Activated CD8-positive, alpha-beta T cell treated with anti-CD3 and anti-CD28 coated beads for 36 hours (primary cell): ENCODE measurements at regions of chr11 and their contacts with region 1.

Region 1: GRCh38 chr11:117946842-117947526 is 17.8 kb upstream of the TMPRSS13 start:
- DNase-seq: peak; percentile 91
- ATAC-seq: peak; percentile 50
- H3K4me3 Mint-ChIP-seq: no peak overlapping the region
- H3K27ac Mint-ChIP-seq: peak overlapping the region; percentile 41
- H3K4me1 Mint-ChIP-seq: peaks cover 79% of the 10 kb centered on the region
- H3K27me3 Mint-ChIP-seq: no peaks in the 10 kb centered on the region
- CTCF ChIP-seq: peak; percentile 95

Region 2: DNA sequence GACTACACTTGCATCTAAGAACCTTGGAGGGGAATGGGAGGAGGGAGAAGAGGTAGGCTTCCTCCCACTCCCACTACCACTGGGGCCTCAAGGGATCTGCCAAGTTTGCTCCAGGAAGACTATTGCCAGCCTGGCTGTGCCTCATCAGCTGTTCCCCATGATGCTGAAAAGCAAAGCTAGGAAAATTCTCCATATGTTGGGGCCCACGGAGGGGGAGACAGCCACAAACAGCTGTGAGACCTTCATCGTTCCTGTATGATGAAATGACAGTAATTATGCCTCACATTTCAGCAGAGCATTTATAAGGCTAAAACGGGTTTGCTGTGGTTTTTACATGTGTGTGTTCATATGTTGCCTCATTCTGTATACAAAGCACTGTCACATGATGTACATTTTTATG is 156.7 kb before region 1 on chr11:
- CTCF ChIA-PET with region 1: no interaction called
- POLR2A ChIA-PET with region 1: no interaction called
- intact Hi-C with region 1: no loop called
- DNase-seq: no peak
- ATAC-seq: no peak
- H3K4me3 Mint-ChIP-seq: no peak overlapping the region
- H3K27ac Mint-ChIP-seq: no peak overlapping the region
- H3K4me1 Mint-ChIP-seq: no peaks in the 10 kb centered on the region
- H3K27me3 Mint-ChIP-seq: peaks cover 30% of the 10 kb centered on the region
- CTCF ChIP-seq: no peak

Region 3: DNA sequence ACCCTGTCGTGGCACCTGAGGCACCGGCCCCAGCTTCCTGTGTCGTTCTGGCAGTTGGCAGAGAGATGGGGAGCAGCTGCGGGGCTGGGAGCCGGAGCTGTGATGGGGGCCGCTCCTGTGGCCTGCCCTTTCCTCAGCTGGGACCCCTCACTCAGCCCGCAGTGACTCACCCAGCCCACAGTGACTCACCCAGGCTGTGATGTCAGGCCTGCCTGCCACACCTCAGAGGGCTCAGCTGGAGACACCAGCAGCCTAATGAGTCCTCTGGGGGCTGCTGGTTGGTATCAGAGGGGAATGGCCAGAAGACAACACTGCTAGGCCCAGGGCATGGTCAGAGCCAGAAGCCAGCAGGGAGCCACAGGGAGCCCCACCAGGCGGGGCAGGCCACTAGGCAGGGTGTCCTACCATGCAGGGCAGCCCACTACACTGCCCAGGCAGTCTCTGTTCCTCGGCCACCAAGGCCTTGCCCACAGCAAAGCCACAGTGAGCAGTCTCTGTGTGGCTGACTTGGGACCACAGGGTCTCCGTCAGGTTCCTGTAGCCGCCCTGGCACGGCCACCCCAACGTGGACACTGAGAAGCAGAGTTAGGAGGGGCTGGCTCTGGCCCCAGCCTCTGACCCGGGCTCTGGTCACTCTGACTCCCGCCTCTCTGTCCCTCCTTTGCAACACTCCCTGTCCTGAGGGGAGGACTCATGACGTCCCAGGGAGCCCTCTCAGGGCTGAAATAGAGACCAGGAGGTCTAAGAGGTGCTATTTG is 118.2 kb before region 1 on chr11:
- CTCF ChIA-PET with region 1: interaction called, 188 read pairs
- POLR2A ChIA-PET with region 1: interaction called, 10 read pairs
- intact Hi-C with region 1: loop called (anchors 5 kb)
- DNase-seq: peak; percentile 97
- ATAC-seq: peak; percentile 89
- H3K4me3 Mint-ChIP-seq: peak overlapping the region; percentile 42
- H3K27ac Mint-ChIP-seq: peak overlapping the region; percentile 77
- H3K4me1 Mint-ChIP-seq: peaks cover 68% of the 10 kb centered on the region
- H3K27me3 Mint-ChIP-seq: no peaks in the 10 kb centered on the region
- CTCF ChIP-seq: no peak

Region 4: DNA sequence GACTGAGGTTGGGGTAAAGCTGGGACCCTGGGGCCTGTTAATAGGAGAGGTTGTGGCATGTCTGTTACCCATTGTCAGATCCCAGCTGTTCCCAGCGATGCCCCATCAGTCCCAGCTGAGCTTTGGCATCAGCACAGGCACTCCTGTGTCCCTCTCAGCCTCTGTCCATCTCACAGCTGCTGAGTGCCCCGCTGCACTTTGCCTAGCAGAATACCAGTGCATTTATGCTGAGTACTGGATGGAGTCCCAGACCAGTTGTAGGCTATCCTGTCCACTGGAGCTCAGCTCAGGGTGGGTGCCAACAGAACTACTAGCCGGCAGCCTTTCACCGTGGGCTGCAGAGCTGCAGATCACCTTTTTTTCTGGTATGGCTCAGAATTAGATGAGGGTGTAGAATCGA is 80.5 kb before region 1 on chr11:
- CTCF ChIA-PET with region 1: interaction called, 10 read pairs
- POLR2A ChIA-PET with region 1: no interaction called
- intact Hi-C with region 1: no loop called
- DNase-seq: no peak
- ATAC-seq: no peak
- H3K4me3 Mint-ChIP-seq: no peak overlapping the region
- H3K27ac Mint-ChIP-seq: no peak overlapping the region
- H3K4me1 Mint-ChIP-seq: peaks cover 3% of the 10 kb centered on the region
- H3K27me3 Mint-ChIP-seq: no peaks in the 10 kb centered on the region
- CTCF ChIP-seq: no peak

Region 5: DNA sequence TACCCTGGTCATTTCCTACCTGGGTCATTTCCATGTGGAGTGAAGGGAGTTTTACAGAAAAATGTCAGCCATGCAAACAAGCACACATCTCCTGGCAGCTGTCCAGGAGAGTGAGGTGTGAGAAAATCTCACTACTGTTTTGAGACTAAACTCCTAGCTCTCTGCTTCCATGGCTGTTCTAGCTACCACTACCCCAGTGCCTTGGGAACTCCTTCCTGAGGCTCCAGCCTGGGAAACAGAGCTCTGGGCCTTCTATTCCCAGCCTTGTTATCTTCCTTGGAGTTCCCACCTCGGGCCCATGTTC is 15.0 kb before region 1 on chr11:
- CTCF ChIA-PET with region 1: interaction called, 172 read pairs
- POLR2A ChIA-PET with region 1: interaction called, 5 read pairs
- intact Hi-C with region 1: no loop called
- DNase-seq: peak; percentile 91
- ATAC-seq: peak; percentile 35
- H3K4me3 Mint-ChIP-seq: peak overlapping the region; percentile 24
- H3K27ac Mint-ChIP-seq: peak overlapping the region; percentile 98
- H3K4me1 Mint-ChIP-seq: peaks cover 84% of the 10 kb centered on the region
- H3K27me3 Mint-ChIP-seq: no peaks in the 10 kb centered on the region
- CTCF ChIP-seq: no peak

Region 6: GRCh38 chr11:117979481-117980211 is 32.7 kb after region 1 on chr11:
- CTCF ChIA-PET with region 1: interaction called, 386 read pairs
- POLR2A ChIA-PET with region 1: interaction called, 87 read pairs
- intact Hi-C with region 1: no loop called
- DNase-seq: peak; percentile 49
- ATAC-seq: peak; percentile 52
- H3K4me3 Mint-ChIP-seq: no peak overlapping the region
- H3K27ac Mint-ChIP-seq: peak overlapping the region; percentile 90
- H3K4me1 Mint-ChIP-seq: peaks cover 82% of the 10 kb centered on the region
- H3K27me3 Mint-ChIP-seq: no peaks in the 10 kb centered on the region
- CTCF ChIP-seq: no peak

Region 7: DNA sequence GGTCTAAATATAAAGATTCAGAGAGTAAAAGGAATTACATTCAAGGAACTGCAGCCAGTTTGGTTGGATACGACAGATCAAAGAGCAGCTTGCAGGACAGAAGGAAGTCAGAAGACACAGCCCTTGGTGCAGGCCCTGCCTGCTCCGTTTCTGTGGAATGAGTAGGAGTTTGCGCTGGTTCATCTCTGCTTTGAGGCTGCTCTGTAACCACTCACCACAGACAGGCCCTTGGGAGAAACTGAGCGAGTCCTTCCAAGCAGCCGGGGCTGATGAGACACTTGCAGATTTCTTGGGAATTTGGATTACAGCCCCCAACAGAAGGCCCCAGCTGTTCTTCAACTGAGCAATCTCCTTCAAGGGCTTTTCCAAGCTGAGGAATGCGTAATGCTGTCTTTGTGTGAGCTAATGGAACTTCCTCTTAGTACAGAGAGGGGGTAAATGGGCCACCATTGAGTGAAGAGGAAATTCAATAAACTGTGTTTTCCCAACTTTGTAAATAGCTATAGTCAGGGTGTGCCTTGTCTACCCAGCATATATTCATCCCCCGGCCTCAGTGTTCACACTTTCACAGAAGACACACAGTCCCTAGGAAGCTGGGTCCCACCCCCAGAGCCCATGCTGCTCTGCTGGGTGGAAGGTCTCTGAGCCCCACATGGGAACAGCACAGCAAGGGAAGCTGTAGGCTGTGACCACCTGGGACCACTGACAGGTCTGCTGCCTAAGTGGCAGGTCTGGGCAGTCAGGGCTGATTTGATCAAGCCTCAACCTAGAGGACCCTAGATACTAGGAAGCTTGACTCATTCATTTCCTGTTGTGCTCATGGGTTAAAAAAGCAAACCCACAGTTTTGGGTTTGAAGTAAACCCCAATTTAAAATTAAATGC is 55.8 kb after region 1 on chr11:
- CTCF ChIA-PET with region 1: interaction called, 386 read pairs
- POLR2A ChIA-PET with region 1: interaction called, 35 read pairs
- intact Hi-C with region 1: loop called (anchors 5 kb)
- DNase-seq: peak; percentile 88
- ATAC-seq: peak; percentile 65
- H3K4me3 Mint-ChIP-seq: peak overlapping the region; percentile 49
- H3K27ac Mint-ChIP-seq: peak overlapping the region; percentile 99
- H3K4me1 Mint-ChIP-seq: peaks cover 90% of the 10 kb centered on the region
- H3K27me3 Mint-ChIP-seq: no peaks in the 10 kb centered on the region
- CTCF ChIP-seq: no peak

Region 8: GRCh38 chr11:118051611-118052461 is 104.9 kb after region 1 on chr11:
- CTCF ChIA-PET with region 1: interaction called, 287 read pairs
- POLR2A ChIA-PET with region 1: interaction called, 10 read pairs
- intact Hi-C with region 1: loop called (anchors 2 kb)
- DNase-seq: peak; percentile 85
- ATAC-seq: peak; percentile 78
- H3K4me3 Mint-ChIP-seq: no peak overlapping the region
- H3K27ac Mint-ChIP-seq: peak overlapping the region; percentile 82
- H3K4me1 Mint-ChIP-seq: peaks cover 59% of the 10 kb centered on the region
- H3K27me3 Mint-ChIP-seq: no peaks in the 10 kb centered on the region
- CTCF ChIP-seq: no peak

Region 9: GRCh38 chr11:118186346-118187107 is 239.5 kb after region 1 on chr11:
- CTCF ChIA-PET with region 1: no interaction called
- POLR2A ChIA-PET with region 1: no interaction called
- intact Hi-C with region 1: no loop called
- DNase-seq: no peak
- ATAC-seq: no peak
- H3K4me3 Mint-ChIP-seq: no peak overlapping the region
- H3K27ac Mint-ChIP-seq: no peak overlapping the region
- H3K4me1 Mint-ChIP-seq: peaks cover 2% of the 10 kb centered on the region
- H3K27me3 Mint-ChIP-seq: peaks cover 8% of the 10 kb centered on the region
- CTCF ChIP-seq: no peak